Left ventricle myocardium inferior (tissue), 1 donor: ENCODE measurements at regions of chr2 and their contacts with region 1.

Region 1: DNA sequence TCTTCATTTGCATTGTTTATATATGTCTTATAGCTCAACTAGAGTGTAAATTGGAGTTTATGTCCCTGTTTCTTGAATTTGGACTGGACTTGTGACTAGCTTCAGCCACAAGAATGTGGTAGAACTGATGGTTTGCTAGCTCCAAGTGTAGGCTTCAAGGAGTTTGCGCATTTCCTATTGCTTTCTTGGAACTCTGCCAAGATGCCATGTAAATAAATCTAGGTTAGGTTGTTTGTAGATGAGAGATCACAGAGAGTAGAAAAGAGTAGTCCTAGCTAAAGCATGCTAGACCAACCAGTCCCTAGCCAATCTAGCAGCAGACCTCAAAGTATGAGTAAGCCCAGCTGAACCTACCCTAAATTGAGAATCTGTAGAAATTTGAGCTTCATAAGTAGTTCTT is 183.0 kb upstream of the CYP26B1 start:
- DNase-seq: no peak
- H3K4me3 ChIP-seq: no peak overlapping the region
- H3K27ac ChIP-seq: no peak overlapping the region
- H3K4me1 ChIP-seq: no peaks in the 10 kb centered on the region
- H3K27me3 ChIP-seq: no peaks in the 10 kb centered on the region
- CTCF ChIP-seq: no peak

Region 2: GRCh38 chr2:71798266-71799012 is 532.2 kb before region 1 on chr2:
- intact Hi-C with region 1: no loop called
- DNase-seq: no peak
- H3K4me3 ChIP-seq: no peak overlapping the region
- H3K27ac ChIP-seq: no peak overlapping the region
- H3K4me1 ChIP-seq: peaks cover 17% of the 10 kb centered on the region
- H3K27me3 ChIP-seq: peaks cover 8% of the 10 kb centered on the region
- CTCF ChIP-seq: peak; percentile 84

Region 3: GRCh38 chr2:72629062-72629461 is 298.4 kb after region 1 on chr2:
- intact Hi-C with region 1: loop called (anchors 5 kb)
- DNase-seq: no peak
- H3K4me3 ChIP-seq: no peak overlapping the region
- H3K27ac ChIP-seq: peak overlapping the region; percentile 63
- H3K4me1 ChIP-seq: peaks cover 55% of the 10 kb centered on the region
- H3K27me3 ChIP-seq: no peaks in the 10 kb centered on the region
- CTCF ChIP-seq: no peak